ENCODE measurements at regions of chr10 and their contacts with region 1.

Region 1: GRCh38 chr10:11515596-11516430 is 95.6 kb downstream of the USP6NL start:
- DNase-seq: peak; percentile 46
- H3K4me3 ChIP-seq: no peak overlapping the region
- H3K27ac ChIP-seq: no peak overlapping the region
- H3K4me1 ChIP-seq: no peaks in the 10 kb centered on the region
- H3K27me3 ChIP-seq: no peaks in the 10 kb centered on the region
- CTCF ChIP-seq: peak; percentile 85

Region 2: GRCh38 chr10:11586170-11586569 is 70.4 kb after region 1 on chr10:
- intact Hi-C with region 1: no loop called
- DNase-seq: no peak
- H3K4me3 ChIP-seq: no peak overlapping the region
- H3K27ac ChIP-seq: no peak overlapping the region
- H3K4me1 ChIP-seq: no peaks in the 10 kb centered on the region
- H3K27me3 ChIP-seq: no peaks in the 10 kb centered on the region
- CTCF ChIP-seq: no peak

Region 3: DNA sequence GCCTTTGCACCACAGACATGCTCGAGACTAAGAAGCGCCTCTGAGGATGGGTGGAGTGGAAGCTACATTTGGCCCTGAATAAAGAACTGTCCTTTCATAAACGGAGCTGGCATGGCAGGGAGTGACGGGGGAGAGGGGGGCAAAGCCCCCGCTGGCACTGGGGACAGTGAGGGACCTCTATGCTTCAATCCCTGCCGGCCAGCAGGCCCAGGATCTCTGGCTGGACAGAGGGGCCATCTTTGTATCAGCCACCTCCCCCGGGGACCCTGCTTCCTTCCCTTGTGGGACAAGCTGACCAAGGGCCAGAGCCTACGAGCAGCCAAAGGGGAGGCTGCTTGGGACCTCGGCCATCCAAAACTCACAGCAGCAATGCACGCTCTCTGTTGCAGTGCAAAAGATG is 198.2 kb after region 1 on chr10:
- intact Hi-C with region 1: no loop called
- DNase-seq: no peak
- H3K4me3 ChIP-seq: no peak overlapping the region
- H3K27ac ChIP-seq: no peak overlapping the region
- H3K4me1 ChIP-seq: no peaks in the 10 kb centered on the region
- H3K27me3 ChIP-seq: no peaks in the 10 kb centered on the region
- CTCF ChIP-seq: no peak

Region 4: GRCh38 chr10:11724938-11725776 is 209.3 kb after region 1 on chr10:
- intact Hi-C with region 1: loop called (anchors 5 kb)
- DNase-seq: peak; percentile 27
- H3K4me3 ChIP-seq: no peak overlapping the region
- H3K27ac ChIP-seq: no peak overlapping the region
- H3K4me1 ChIP-seq: no peaks in the 10 kb centered on the region
- H3K27me3 ChIP-seq: no peaks in the 10 kb centered on the region
- CTCF ChIP-seq: peak; percentile 66

Region 5: DNA sequence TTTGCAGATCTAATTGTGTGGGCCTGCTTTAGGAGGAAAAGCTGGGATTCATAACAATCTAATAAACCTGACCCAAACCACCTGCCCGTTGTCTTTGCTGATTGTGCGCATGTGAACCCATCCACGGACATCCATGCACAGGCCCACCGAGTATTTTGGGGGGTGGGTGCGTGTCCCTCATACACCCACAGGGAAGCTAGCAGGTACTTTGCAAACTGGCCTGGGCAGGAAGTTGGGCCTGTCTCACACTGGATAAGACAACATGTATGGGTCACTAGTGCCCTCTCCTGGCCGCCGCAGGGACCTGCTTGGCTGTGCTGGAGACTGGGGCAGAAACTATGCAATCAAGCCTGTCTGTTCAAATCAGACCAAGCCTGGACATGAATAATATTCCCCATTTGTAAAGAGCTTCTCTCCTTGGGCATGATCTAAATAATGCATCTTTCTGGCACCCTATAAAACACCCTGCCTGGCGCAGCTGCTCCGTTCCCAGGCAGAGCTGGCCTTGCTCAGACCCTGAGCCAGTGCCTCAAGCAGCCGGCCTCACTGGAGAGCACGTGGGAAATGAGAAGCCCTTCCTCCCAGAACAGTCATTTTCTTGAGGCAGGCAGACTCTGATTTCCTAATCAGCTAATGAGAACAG is 242.1 kb after region 1 on chr10:
- intact Hi-C with region 1: loop called (anchors 1 kb)
- DNase-seq: peak; percentile 93
- H3K4me3 ChIP-seq: no peak overlapping the region
- H3K27ac ChIP-seq: peak overlapping the region; percentile 24
- H3K4me1 ChIP-seq: no peaks in the 10 kb centered on the region
- H3K27me3 ChIP-seq: no peaks in the 10 kb centered on the region
- CTCF ChIP-seq: peak; percentile 95